ENCODE measurements at regions of chr11 and their contacts with region 1.

Region 1: DNA sequence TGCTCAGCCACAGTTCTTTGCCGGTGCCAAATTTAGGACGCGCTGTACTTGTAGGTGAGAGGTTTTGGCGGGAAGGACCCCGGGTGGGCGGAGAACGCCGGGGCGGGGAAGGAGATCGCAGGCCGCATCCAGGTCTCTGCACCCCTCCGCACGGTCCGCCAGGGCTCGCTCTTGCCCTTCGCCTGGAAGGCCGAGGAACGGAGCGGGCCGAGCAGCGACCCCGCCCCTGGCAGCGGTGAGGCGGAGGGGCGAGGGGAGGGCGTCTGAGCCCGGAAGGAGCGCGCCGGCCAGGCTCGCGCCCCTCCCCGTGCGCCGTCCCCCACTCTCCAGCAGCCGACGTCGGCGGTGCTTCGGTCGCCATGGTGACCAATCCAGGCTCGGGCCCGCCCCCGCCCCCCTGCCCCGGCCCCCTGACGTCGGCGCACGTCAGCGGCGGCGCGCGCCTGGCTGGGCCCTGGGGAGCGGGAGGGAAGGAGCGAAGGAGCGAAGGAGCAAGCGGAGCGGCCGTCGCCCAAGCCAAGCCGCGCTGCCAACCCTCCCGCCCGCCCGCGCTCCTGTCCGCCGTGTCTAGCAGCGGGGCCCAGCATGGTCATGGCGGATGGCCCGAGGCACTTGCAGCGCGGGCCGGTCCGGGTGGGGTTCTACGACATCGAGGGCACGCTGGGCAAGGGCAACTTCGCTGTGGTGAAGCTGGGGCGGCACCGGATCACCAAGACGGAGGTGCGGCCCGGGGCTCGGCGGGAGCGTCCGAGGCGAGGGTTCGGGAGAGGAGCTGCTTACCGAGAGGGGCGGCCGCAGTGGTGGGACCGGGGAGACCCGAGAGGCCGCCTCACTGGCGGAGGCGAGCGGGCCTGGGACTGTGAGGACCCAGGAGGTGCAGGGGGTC is at the start of gene SIK2:
- DNase-seq: peak; percentile 77 to 90 (median 81)
- ATAC-seq: peak; percentile 93
- H3K4me3 ChIP-seq: peak within 1 kb of the TSS; percentile 77
- H3K4me3 Mint-ChIP-seq: peak within 1 kb of the TSS; percentile 92 to 99 (median 96)
- H3K27ac ChIP-seq: peak within 1 kb of the TSS; percentile 93
- H3K27ac Mint-ChIP-seq: peak within 1 kb of the TSS; percentile 84 to 99 (median 95)
- H3K4me1 ChIP-seq: peaks cover 8 to 11% of the 10 kb centered on the region in 2 donors
- H3K4me1 Mint-ChIP-seq: peaks cover 16 to 33% (median 25%) of the 10 kb centered on the region in 7 donors
- H3K27me3 ChIP-seq: no peaks in the 10 kb centered on the region
- H3K27me3 Mint-ChIP-seq: peaks cover 0 to 6% (median 0%) of the 10 kb centered on the region in 5 donors
- total RNA-seq, gene SIK2: 7.3 to 12.9 (median 9.8) TPM

Region 2: DNA sequence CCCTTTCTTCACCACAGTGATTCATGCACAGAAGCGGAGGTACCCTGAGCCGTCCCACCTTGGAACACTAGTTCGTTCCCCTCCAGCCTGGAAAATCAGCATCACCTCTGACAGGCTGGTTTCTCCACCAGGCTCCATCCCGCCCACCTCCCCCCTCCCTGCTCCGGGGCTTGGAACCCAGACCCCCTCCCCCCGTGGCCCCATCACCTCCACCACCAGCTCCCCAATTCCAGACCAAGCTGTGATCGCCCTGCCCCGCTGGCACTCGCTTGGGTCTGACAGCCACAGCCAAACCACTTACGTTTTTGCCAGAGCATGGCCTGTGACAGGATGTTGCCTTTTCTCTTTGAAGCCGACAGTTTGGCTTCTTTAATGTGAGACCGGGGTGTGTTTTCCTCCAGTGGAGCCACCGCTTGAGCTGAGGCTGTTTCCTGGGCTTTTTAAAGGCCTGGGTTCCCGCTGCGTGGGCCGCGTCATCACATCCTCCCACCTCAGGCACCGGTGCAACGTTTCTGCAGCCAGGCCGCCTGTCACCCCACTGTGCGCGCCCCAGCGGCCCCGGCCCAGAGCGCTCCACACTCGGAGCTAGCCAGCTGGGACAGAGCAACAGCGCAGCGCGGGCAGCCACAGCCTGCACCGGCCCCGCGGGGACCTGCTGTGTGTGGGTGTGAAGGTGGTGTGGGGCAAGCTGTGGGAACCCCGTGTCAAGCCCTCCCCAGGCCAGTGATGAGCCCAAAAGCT is 223.2 kb before region 1 on chr11 and contains the start of gene POU2AF1:
- CTCF ChIA-PET with region 1: no interaction called
- POLR2A ChIA-PET with region 1: no interaction called
- intact Hi-C with region 1: loop called in 1 of 2 experiments (anchors 2 kb)
- DNase-seq: peak; percentile 36 to 87 (median 83)
- ATAC-seq: peak; percentile 91
- H3K4me3 ChIP-seq: peak within 1 kb of the TSS; percentile 39
- H3K4me3 Mint-ChIP-seq: peak within 1 kb of the TSS; percentile 73 to 89 (median 84)
- H3K27ac ChIP-seq: peak within 1 kb of the TSS; percentile 58
- H3K27ac Mint-ChIP-seq: peak within 1 kb of the TSS; percentile 85 to 99 (median 95)
- H3K4me1 ChIP-seq: peaks cover 0 to 19% of the 10 kb centered on the region in 2 donors
- H3K4me1 Mint-ChIP-seq: peaks cover 7 to 50% (median 42%) of the 10 kb centered on the region in 7 donors
- H3K27me3 ChIP-seq: no peaks in the 10 kb centered on the region
- H3K27me3 Mint-ChIP-seq: peaks cover 0 to 3% (median 0%) of the 10 kb centered on the region in 5 donors
- total RNA-seq, gene POU2AF1: 0.57 to 11.3 (median 4.9) TPM

Region 3: GRCh38 chr11:111586388-111586831 is 15.8 kb before region 1 on chr11:
- CTCF ChIA-PET with region 1: interaction called, 6 read pairs
- POLR2A ChIA-PET with region 1: no interaction called
- intact Hi-C with region 1: loop called (anchors 1 to 2 kb)
- DNase-seq: peak in 7 of 9 donors; percentile 37 to 65 (median 56)
- ATAC-seq: peak; percentile 83
- H3K4me3 ChIP-seq: no peak overlapping the region
- H3K4me3 Mint-ChIP-seq: no peak overlapping the region
- H3K27ac ChIP-seq: no peak overlapping the region
- H3K27ac Mint-ChIP-seq: no peak overlapping the region
- H3K4me1 ChIP-seq: no peaks in the 10 kb centered on the region
- H3K4me1 Mint-ChIP-seq: peaks cover 0 to 2% (median 0%) of the 10 kb centered on the region in 7 donors
- H3K27me3 ChIP-seq: no peaks in the 10 kb centered on the region
- H3K27me3 Mint-ChIP-seq: peaks cover 0 to 11% (median 3%) of the 10 kb centered on the region in 5 donors

Region 4: GRCh38 chr11:111777094-111778046 is 175.1 kb after region 1 on chr11:
- CTCF ChIA-PET with region 1: interaction called, 6 read pairs
- POLR2A ChIA-PET with region 1: interaction called, 4 read pairs
- intact Hi-C with region 1: loop called (anchors 1 kb)
- DNase-seq: peak in 7 of 9 donors; percentile 43 to 71 (median 57)
- ATAC-seq: peak; percentile 89
- H3K4me3 ChIP-seq: no peak overlapping the region
- H3K4me3 Mint-ChIP-seq: no peak overlapping the region
- H3K27ac ChIP-seq: no peak overlapping the region
- H3K27ac Mint-ChIP-seq: no peak overlapping the region
- H3K4me1 ChIP-seq: no peaks in the 10 kb centered on the region
- H3K4me1 Mint-ChIP-seq: no peaks in the 10 kb centered on the region
- H3K27me3 ChIP-seq: no peaks in the 10 kb centered on the region
- H3K27me3 Mint-ChIP-seq: no peaks in the 10 kb centered on the region

Region 5: GRCh38 chr11:111870886-111871692 is 268.9 kb after region 1 on chr11 and contains the start of gene ALG9:
- CTCF ChIA-PET with region 1: interaction called, 4 read pairs
- POLR2A ChIA-PET with region 1: no interaction called
- intact Hi-C with region 1: loop called (anchors 2 kb)
- DNase-seq: peak; percentile 79 to 94 (median 88)
- ATAC-seq: peak; percentile 91
- H3K4me3 ChIP-seq: peak within 1 kb of the TSS; percentile 74
- H3K4me3 Mint-ChIP-seq: peak within 1 kb of the TSS; percentile 86 to 96 (median 93)
- H3K27ac ChIP-seq: peak within 1 kb of the TSS; percentile 91
- H3K27ac Mint-ChIP-seq: peak within 1 kb of the TSS; percentile 87 to 98 (median 94)
- H3K4me1 ChIP-seq: peaks cover 8 to 10% of the 10 kb centered on the region in 2 donors
- H3K4me1 Mint-ChIP-seq: peaks cover 9 to 41% (median 34%) of the 10 kb centered on the region in 7 donors
- H3K27me3 ChIP-seq: no peaks in the 10 kb centered on the region
- H3K27me3 Mint-ChIP-seq: no peaks in the 10 kb centered on the region
- total RNA-seq, gene ALG9: 16.4 to 30.2 (median 29.2) TPM

Region 6: GRCh38 chr11:112024773-112025678 is 422.8 kb after region 1 on chr11 and contains the start of gene DLAT:
- CTCF ChIA-PET with region 1: no interaction called
- POLR2A ChIA-PET with region 1: no interaction called
- intact Hi-C with region 1: loop called in 1 of 2 experiments (anchors 1 kb)
- DNase-seq: peak; percentile 66 to 87 (median 85)
- ATAC-seq: peak; percentile 95
- H3K4me3 ChIP-seq: peak within 1 kb of the TSS; percentile 100
- H3K4me3 Mint-ChIP-seq: peak within 1 kb of the TSS; percentile 97 to 100 (median 99)
- H3K27ac ChIP-seq: peak within 1 kb of the TSS; percentile 93
- H3K27ac Mint-ChIP-seq: peak within 1 kb of the TSS; percentile 96 to 100 (median 98)
- H3K4me1 ChIP-seq: peaks cover 0 to 7% of the 10 kb centered on the region in 2 donors
- H3K4me1 Mint-ChIP-seq: peaks cover 14 to 39% (median 30%) of the 10 kb centered on the region in 7 donors
- H3K27me3 ChIP-seq: no peaks in the 10 kb centered on the region
- H3K27me3 Mint-ChIP-seq: no peaks in the 10 kb centered on the region
- total RNA-seq, gene DLAT: 13.1 to 31.0 (median 17.8) TPM

Measured in naive thymus-derived CD4-positive, alpha-beta T cell (primary cell).